Panc1 (cell line): ENCODE measurements at regions of chr7 and their contacts with region 1.

Region 1: GRCh38 chr7:138691178-138691577 is 10.0 kb downstream of the SVOPL start:
- DNase-seq: no peak
- ATAC-seq: no peak
- H3K4me3 ChIP-seq: no peak overlapping the region
- H3K27ac ChIP-seq: no peak overlapping the region
- H3K4me1 ChIP-seq: no peaks in the 10 kb centered on the region
- H3K27me3 ChIP-seq: no peaks in the 10 kb centered on the region; the same call in 1 of the 2 replicates
- CTCF ChIP-seq: no peak

Region 2: DNA sequence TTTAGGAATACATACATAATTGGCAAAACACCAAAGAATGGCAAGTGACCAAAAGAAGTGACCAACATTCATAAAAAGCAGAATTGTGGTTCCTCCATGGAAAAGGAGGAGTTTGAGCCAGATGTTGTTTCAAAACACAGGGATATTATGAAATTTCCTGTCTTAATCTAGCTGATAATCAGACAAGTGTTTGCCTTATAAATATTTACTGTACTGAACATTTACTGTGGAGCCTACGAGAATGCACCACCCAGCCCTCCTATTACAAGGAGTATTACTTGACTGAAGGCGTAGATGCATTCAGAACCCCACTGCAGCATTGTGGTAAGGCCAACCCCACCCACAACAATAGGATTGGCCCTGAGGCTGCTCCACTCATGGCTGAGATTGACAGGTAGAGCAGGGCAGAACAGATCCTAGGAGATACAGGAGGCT is 496.0 kb before region 1 on chr7:
- CTCF ChIA-PET with region 1: no interaction called
- POLR2A ChIA-PET with region 1: no interaction called
- in situ Hi-C with region 1: no loop called
- intact Hi-C with region 1: no loop called
- DNase-seq: no peak
- ATAC-seq: no peak
- H3K4me3 ChIP-seq: no peak overlapping the region
- H3K27ac ChIP-seq: no peak overlapping the region
- H3K4me1 ChIP-seq: no peaks in the 10 kb centered on the region
- H3K27me3 ChIP-seq: no peaks in the 10 kb centered on the region
- CTCF ChIP-seq: no peak

Region 3: GRCh38 chr7:138705167-138705566 is 14.0 kb after region 1 on chr7:
- CTCF ChIA-PET with region 1: no interaction called
- POLR2A ChIA-PET with region 1: interaction called, 10 read pairs
- in situ Hi-C with region 1: no loop called
- intact Hi-C with region 1: no loop called
- DNase-seq: no peak
- ATAC-seq: no peak
- H3K4me3 ChIP-seq: no peak overlapping the region
- H3K27ac ChIP-seq: no peak overlapping the region
- H3K4me1 ChIP-seq: no peaks in the 10 kb centered on the region
- H3K27me3 ChIP-seq: no peaks in the 10 kb centered on the region
- CTCF ChIP-seq: no peak